ENCODE measurements at regions of chr5 and their contacts with region 1.

Region 1: GRCh38 chr5:151659001-151659754 is 27.5 kb downstream of the SPARC start:
- DNase-seq: peak; percentile 94
- H3K4me3 ChIP-seq: no peak overlapping the region
- H3K27ac ChIP-seq: peak overlapping the region in 2 of 4 donors; percentile 1 to 9
- H3K4me1 ChIP-seq: peaks cover 20 to 36% (median 32%) of the 10 kb centered on the region in 4 donors
- H3K27me3 ChIP-seq: no peaks in the 10 kb centered on the region
- CTCF ChIP-seq: peak; percentile 87 to 92 (median 90)
- EP300 ChIP-seq: no peak
- POLR2A ChIP-seq: no peak

Region 2: GRCh38 chr5:151680944-151681427 is 21.8 kb after region 1 on chr5:
- intact Hi-C with region 1: loop called (anchors 2 kb)
- DNase-seq: no peak
- H3K4me3 ChIP-seq: peak overlapping the region in 3 of 4 donors; percentile 5 to 23 (median 8)
- H3K27ac ChIP-seq: peak overlapping the region; percentile 86 to 92 (median 88)
- H3K4me1 ChIP-seq: peaks cover 74 to 100% (median 99%) of the 10 kb centered on the region in 4 donors
- H3K27me3 ChIP-seq: no peaks in the 10 kb centered on the region
- CTCF ChIP-seq: no peak
- EP300 ChIP-seq: no peak
- POLR2A ChIP-seq: no peak

Region 3: GRCh38 chr5:151721087-151721646 is 62.0 kb after region 1 on chr5:
- intact Hi-C with region 1: loop called (anchors 5 kb)
- DNase-seq: no peak
- H3K4me3 ChIP-seq: no peak overlapping the region
- H3K27ac ChIP-seq: no peak overlapping the region
- H3K4me1 ChIP-seq: peaks cover 8 to 40% (median 33%) of the 10 kb centered on the region in 4 donors
- H3K27me3 ChIP-seq: no peaks in the 10 kb centered on the region
- CTCF ChIP-seq: no peak
- EP300 ChIP-seq: no peak
- POLR2A ChIP-seq: no peak

Region 4: GRCh38 chr5:151740336-151740942 is 81.3 kb after region 1 on chr5:
- intact Hi-C with region 1: loop called (anchors 1 kb)
- DNase-seq: no peak
- H3K4me3 ChIP-seq: peak overlapping the region in 3 of 4 donors; percentile 22 to 31 (median 25)
- H3K27ac ChIP-seq: peak overlapping the region; percentile 75 to 79 (median 78)
- H3K4me1 ChIP-seq: peaks cover 31 to 52% (median 45%) of the 10 kb centered on the region in 4 donors
- H3K27me3 ChIP-seq: no peaks in the 10 kb centered on the region
- CTCF ChIP-seq: peak; percentile 88 to 97 (median 97)
- EP300 ChIP-seq: no peak
- POLR2A ChIP-seq: no peak